KBM-7 (cell line): ENCODE measurements at regions of chr22 and their contacts with region 1.

Region 1: DNA sequence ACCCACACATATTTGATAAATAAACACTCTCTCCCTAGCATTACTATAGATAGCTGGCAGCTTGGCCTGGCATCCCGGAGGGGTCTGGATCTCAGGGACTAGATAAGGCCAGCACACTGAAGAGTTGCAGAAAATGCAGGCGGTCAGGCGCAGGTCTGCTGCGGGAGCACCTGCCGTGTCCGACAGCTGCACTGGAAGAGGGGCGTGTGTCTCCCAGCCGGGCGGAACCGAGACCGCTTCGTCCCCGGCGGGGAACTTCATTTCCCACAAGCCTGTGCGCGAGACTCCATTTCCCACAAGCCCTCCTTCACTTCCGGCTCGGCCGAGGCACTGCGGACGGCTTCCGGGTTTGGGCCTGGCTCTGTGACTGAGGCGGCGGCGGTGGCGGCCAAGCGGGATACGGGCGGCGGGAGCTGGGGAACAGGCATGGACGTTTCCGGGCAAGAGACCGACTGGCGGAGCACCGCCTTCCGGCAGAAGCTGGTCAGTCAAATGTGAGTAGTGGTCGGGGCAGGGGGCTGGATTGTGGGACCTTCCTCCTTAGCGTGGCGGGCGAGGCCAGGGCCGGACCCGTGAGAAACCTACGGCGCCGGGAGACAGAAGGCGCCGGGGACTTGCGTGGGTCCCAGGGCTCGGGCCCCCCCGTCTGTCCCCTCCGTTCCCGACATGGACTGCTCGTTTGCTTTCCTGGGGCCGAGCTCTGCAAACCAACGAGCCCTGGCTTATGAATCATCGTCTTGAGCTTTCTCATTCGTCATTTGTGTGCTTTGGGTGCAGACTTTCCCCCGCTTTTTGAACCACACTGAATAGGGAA is at the start of gene MED15:
- DNase-seq: peak; percentile 91

Region 2: GRCh38 chr22:20606041-20606783 is 98.8 kb after region 1 on chr22:
- in situ Hi-C with region 1: loop called (anchors 25 kb)
- DNase-seq: peak; percentile 64

Region 3: DNA sequence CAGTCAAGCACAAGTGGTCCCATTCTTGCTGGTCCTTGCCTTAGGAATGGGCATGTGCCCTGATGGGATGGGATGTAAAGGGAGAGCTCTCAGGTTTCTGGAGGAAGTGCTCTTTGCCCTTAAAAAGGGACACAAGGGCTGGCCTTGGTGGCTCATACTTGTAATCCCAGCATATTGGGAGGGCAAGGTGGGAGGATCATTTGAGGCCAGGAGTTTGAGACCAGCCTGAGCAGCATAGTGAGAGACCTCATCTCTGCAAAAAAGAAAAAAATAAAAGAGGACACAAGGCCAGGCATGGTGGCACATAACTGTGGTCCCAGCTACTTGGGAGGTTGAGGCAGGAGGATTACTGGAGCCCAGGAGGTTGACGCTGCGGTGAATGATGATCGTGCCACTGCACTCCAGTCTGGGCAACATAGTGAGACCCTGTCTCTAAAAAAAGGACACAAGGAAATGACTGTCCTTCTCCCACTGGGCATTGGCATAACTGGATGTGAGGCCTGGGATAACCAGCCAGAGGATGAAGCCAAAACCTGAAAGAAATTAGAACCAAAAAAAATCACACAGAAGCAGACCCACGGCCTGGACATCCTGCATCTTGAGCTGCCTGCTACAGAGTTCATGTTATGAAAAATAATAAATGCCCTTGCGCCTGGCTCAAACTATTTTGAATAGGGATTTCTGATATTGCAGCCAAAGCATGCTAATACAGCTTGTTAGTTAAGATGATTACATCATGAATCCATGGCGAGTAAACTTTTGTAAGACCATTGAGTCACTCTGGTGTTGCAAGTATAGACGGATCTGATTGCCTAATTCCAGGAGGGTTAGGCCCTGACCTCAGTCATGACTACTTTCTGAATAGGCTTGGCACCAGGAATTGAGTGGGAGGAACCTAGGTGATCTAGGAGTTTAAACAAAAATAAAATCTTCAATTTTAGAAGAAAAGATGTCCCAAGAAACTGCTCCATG is 396.8 kb after region 1 on chr22:
- in situ Hi-C with region 1: no loop called
- DNase-seq: no peak